CD8-positive, alpha-beta memory T cell (primary cell): ENCODE measurements at regions of chr3 and their contacts with region 1.

Region 1: GRCh38 chr3:13452490-13453335 is 27.4 kb upstream of the HDAC11 start:
- DNase-seq: peak in 4 of 5 donors; percentile 12 to 64 (median 51)
- H3K4me3 ChIP-seq: peak overlapping the region; percentile 84
- H3K4me3 Mint-ChIP-seq: peak overlapping the region; percentile 88 to 98 (median 96)
- H3K27ac ChIP-seq: no peak overlapping the region
- H3K27ac Mint-ChIP-seq: peak overlapping the region in 7 of 8 donors; percentile 70 to 99 (median 92)
- H3K4me1 ChIP-seq: peaks cover 15% of the 10 kb centered on the region
- H3K4me1 Mint-ChIP-seq: peaks cover 17 to 21% (median 19%) of the 10 kb centered on the region in 3 donors
- H3K27me3 ChIP-seq: no peaks in the 10 kb centered on the region
- H3K27me3 Mint-ChIP-seq: no peaks in the 10 kb centered on the region

Region 2: DNA sequence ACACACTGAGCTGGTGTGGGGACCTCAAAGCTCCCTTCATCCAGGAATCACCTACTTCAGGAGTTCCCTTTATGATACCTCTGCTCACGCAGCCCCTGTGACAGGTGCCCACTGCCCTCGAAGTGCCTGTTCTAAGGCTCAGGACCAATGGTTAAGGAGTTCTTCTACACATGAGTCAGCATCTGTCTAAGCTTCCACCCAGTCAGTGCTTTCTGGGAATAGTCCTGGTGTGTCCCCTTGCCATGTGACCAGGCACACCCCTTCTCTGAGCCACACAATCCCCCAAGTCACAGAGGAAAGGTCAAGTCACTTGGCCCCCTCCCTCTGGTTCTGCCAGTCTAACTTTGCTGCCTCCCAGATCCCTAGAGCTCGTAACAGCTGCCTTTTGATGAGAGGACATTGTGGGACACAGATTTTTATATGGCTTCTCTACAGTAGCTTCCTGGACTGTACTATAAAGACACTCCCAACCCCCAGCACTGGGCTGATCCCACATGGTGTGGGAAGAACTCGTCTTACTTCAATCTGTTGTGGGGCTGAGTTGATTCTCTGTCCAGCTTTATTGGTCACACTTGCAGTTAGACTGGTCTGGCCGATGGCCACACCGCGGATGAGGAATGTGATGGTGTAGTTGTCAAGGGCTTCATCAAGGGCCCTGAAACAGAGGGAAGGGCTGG is 111.3 kb before region 1 on chr3:
- CTCF ChIA-PET with region 1: interaction called, 125 read pairs
- POLR2A ChIA-PET with region 1: no interaction called
- DNase-seq: no peak
- H3K4me3 ChIP-seq: no peak overlapping the region
- H3K4me3 Mint-ChIP-seq: peak overlapping the region in 1 of 7 donors; percentile 51
- H3K27ac ChIP-seq: no peak overlapping the region
- H3K27ac Mint-ChIP-seq: peak overlapping the region in 3 of 8 donors; percentile 31 to 84 (median 60)
- H3K4me1 ChIP-seq: peaks cover 17% of the 10 kb centered on the region
- H3K4me1 Mint-ChIP-seq: peaks cover 19 to 33% (median 32%) of the 10 kb centered on the region in 3 donors
- H3K27me3 ChIP-seq: no peaks in the 10 kb centered on the region
- H3K27me3 Mint-ChIP-seq: no peaks in the 10 kb centered on the region

Region 3: DNA sequence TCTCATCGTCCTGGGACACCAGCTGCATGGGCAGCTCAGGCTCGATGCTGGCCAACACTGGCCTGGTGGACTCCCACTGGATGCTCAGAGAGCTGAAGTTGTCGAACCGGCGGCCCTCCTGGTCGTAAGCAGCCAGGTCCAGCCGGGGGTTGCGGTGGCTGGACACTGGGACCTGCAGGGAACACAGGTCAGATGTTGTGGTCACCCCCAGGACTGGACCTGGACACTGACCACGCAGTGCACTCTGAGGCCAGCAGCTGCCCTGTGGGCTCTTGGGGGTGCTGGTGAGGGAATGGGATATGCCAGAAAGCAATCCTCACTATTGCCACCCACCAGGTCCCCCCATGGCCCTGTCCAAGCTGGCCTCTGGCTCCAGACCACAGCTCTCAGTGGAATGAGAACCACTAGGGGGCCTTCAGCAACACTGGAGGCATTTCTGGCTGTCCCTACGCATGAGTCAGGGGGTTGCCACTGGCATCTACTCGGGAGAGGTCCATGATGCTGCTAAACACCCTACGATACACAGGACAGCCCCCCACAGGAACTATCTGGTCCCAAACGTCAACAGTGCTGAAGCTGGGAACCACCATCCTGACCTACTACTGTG is 98.7 kb before region 1 on chr3:
- CTCF ChIA-PET with region 1: interaction called, 125 read pairs
- POLR2A ChIA-PET with region 1: no interaction called
- DNase-seq: no peak
- H3K4me3 ChIP-seq: no peak overlapping the region
- H3K4me3 Mint-ChIP-seq: no peak overlapping the region
- H3K27ac ChIP-seq: no peak overlapping the region
- H3K27ac Mint-ChIP-seq: peak overlapping the region in 3 of 8 donors; percentile 50 to 66 (median 60)
- H3K4me1 ChIP-seq: peaks cover 11% of the 10 kb centered on the region
- H3K4me1 Mint-ChIP-seq: peaks cover 9 to 15% (median 15%) of the 10 kb centered on the region in 3 donors
- H3K27me3 ChIP-seq: no peaks in the 10 kb centered on the region
- H3K27me3 Mint-ChIP-seq: peaks cover 0 to 1% of the 10 kb centered on the region in 2 donors

Region 4: GRCh38 chr3:13405614-13406013 is 47.1 kb before region 1 on chr3:
- CTCF ChIA-PET with region 1: interaction called, 16 read pairs
- POLR2A ChIA-PET with region 1: interaction called, 3 read pairs
- DNase-seq: peak in 1 of 5 donors; percentile 12
- H3K4me3 ChIP-seq: no peak overlapping the region
- H3K4me3 Mint-ChIP-seq: no peak overlapping the region
- H3K27ac ChIP-seq: no peak overlapping the region
- H3K27ac Mint-ChIP-seq: peak overlapping the region in 6 of 8 donors; percentile 23 to 83 (median 64)
- H3K4me1 ChIP-seq: peaks cover 33% of the 10 kb centered on the region
- H3K4me1 Mint-ChIP-seq: peaks cover 48 to 71% (median 69%) of the 10 kb centered on the region in 3 donors
- H3K27me3 ChIP-seq: no peaks in the 10 kb centered on the region
- H3K27me3 Mint-ChIP-seq: peaks cover 0 to 2% of the 10 kb centered on the region in 2 donors

Region 5: GRCh38 chr3:13419505-13420044 is 33.1 kb before region 1 on chr3:
- CTCF ChIA-PET with region 1: interaction called, 106 read pairs
- POLR2A ChIA-PET with region 1: interaction called, 16 read pairs
- DNase-seq: peak; percentile 35 to 72 (median 56)
- H3K4me3 ChIP-seq: peak overlapping the region; percentile 94
- H3K4me3 Mint-ChIP-seq: peak overlapping the region; percentile 76 to 97 (median 94)
- H3K27ac ChIP-seq: peak overlapping the region; percentile 79
- H3K27ac Mint-ChIP-seq: peak overlapping the region; percentile 85 to 99 (median 97)
- H3K4me1 ChIP-seq: peaks cover 62% of the 10 kb centered on the region
- H3K4me1 Mint-ChIP-seq: peaks cover 57 to 66% (median 64%) of the 10 kb centered on the region in 3 donors
- H3K27me3 ChIP-seq: no peaks in the 10 kb centered on the region
- H3K27me3 Mint-ChIP-seq: peaks cover 0 to 4% of the 10 kb centered on the region in 2 donors

Region 6: GRCh38 chr3:13479581-13480339 is 27.0 kb after region 1 on chr3 and contains the start of gene HDAC11:
- CTCF ChIA-PET with region 1: interaction called, 12 read pairs
- POLR2A ChIA-PET with region 1: interaction called, 8 read pairs
- DNase-seq: peak; percentile 96 to 99 (median 98)
- H3K4me3 ChIP-seq: peak within 1 kb of the TSS; percentile 84
- H3K4me3 Mint-ChIP-seq: peak within 1 kb of the TSS; percentile 91 to 95 (median 94)
- H3K27ac ChIP-seq: peak within 1 kb of the TSS; percentile 90
- H3K27ac Mint-ChIP-seq: peak within 1 kb of the TSS; percentile 81 to 95 (median 93)
- H3K4me1 ChIP-seq: peaks cover 16% of the 10 kb centered on the region
- H3K4me1 Mint-ChIP-seq: peaks cover under 1 to 29% (median 7%) of the 10 kb centered on the region in 3 donors
- H3K27me3 ChIP-seq: no peaks in the 10 kb centered on the region
- H3K27me3 Mint-ChIP-seq: peaks cover 0 to 2% of the 10 kb centered on the region in 2 donors
- total RNA-seq, gene HDAC11: 2.6 to 3.2 TPM